ENCODE measurements at regions of chr16 and their contacts with region 1.

Region 1: GRCh38 chr16:2911580-2912329 is at the start of gene FLYWCH1:
- DNase-seq: peak; percentile 99
- H3K4me3 ChIP-seq: peak within 1 kb of the TSS; percentile 87
- H3K27ac ChIP-seq: peak within 1 kb of the TSS; percentile 71
- H3K4me1 ChIP-seq: no peaks in the 10 kb centered on the region
- H3K27me3 ChIP-seq: no peaks in the 10 kb centered on the region
- CTCF ChIP-seq: no peak
- total RNA-seq, gene FLYWCH1: 18.5 to 28.4 TPM

Region 2: DNA sequence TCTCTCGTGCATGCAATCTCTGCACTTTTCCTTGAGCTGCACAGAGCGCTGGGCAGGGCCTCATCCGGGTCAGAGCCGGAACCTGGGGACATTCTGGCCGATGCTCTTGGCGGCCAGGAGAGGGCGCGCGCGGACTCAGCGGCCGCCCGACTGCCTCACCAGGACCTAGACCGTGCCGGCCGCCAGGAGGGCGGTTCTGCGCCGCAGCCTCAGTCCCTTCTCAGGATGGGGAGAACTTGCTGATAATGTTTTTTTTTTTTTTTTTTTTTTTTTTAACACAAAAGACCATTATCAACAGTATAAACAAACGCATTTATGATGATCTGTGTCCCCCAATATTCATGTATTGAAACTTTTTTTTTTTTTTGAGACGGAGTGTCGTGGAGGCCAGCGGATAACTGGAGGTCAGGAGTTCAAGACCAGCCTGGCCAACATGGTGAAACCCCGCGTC is 36.8 kb before region 1 on chr16:
- intact Hi-C with region 1: loop called (anchors 5 kb)
- DNase-seq: peak; percentile 79
- H3K4me3 ChIP-seq: no peak overlapping the region
- H3K27ac ChIP-seq: no peak overlapping the region
- H3K4me1 ChIP-seq: no peaks in the 10 kb centered on the region
- H3K27me3 ChIP-seq: no peaks in the 10 kb centered on the region
- CTCF ChIP-seq: peak; percentile 96

Region 3: DNA sequence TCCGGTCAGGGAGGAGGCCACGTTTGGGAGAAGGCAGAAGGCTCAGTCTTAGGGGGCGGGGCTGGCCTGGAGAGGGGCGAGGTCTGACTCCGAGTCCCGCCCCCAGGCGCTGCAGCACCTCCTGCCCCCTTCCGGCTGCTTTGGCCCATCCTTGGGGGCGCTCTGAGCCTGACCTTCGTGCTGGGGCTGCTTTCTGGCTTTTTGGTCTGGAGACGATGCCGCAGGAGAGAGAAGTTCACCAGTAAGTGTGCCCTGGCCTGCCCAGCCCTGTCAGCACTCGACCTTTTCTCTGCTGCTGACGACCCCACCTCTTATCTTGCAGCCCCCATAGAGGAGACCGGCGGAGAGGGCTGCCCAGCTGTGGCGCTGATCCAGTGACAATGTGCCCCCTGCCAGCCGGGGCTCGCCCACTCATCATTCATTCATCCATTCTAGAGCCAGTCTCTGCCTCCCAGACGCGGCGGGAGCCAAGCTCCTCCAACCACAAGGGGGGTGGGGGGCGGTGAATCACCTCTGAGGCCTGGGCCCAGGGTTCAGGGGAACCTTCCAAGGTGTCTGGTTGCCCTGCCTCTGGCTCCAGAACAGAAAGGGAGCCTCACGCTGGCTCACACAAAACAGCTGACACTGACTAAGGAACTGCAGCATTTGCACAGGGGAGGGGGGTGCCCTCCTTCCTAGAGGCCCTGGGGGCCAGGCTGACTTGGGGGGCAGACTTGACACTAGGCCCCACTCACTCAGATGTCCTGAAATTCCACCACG is 109.9 kb after region 1 on chr16:
- intact Hi-C with region 1: no loop called
- DNase-seq: peak; percentile 90
- H3K4me3 ChIP-seq: peak overlapping the region; percentile 79
- H3K27ac ChIP-seq: peak overlapping the region; percentile 96
- H3K4me1 ChIP-seq: peaks cover 18% of the 10 kb centered on the region
- H3K27me3 ChIP-seq: no peaks in the 10 kb centered on the region
- CTCF ChIP-seq: no peak

Measured in colonic mucosa (tissue), 4 donors.